GM12878 (cell line): ENCODE measurements at regions of chr13 and their contacts with region 1.

Region 1: DNA sequence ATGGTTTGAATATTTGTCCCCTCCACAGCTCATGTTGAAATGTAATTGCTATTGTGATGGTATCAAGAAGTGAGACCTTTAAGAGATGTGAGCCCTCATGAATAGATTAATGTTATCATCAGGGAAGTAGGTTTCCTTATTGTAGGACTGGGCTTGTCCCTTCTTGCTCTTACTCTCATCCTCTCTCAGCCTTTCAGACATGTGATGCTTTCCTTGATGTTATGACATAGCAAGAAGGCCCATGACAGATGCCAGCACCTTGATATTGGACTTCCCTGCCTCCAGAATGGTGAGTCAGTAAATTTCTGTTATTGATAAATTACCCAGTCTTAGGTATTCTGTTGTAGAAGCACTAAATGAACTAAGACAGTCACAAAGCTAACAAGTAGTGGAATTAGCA is 5.7 kb upstream of the ZMYM2 start:
- DNase-seq: no peak
- ATAC-seq: no peak
- H3K4me3 ChIP-seq: no peak overlapping the region
- H3K27ac ChIP-seq: no peak overlapping the region
- H3K4me1 ChIP-seq: no peaks in the 10 kb centered on the region
- H3K27me3 ChIP-seq: no peaks in the 10 kb centered on the region
- CTCF ChIP-seq: no peak
- EP300 ChIP-seq: no peak
- POLR2A ChIP-seq: no peak
- RAD21 ChIP-seq: no peak

Region 2: GRCh38 chr13:19940106-19940505 is 12.7 kb before region 1 on chr13:
- CTCF ChIA-PET with region 1: interaction called, 13 read pairs
- POLR2A ChIA-PET with region 1: interaction called, 3 read pairs
- RAD21 ChIA-PET with region 1: no interaction called
- SMC1A ChIA-PET with region 1: interaction called, 3 read pairs
- in situ Hi-C with region 1: no loop called
- intact Hi-C with region 1: no loop called
- DNase-seq: no peak
- ATAC-seq: no peak
- H3K4me3 ChIP-seq: no peak overlapping the region
- H3K27ac ChIP-seq: no peak overlapping the region
- H3K4me1 ChIP-seq: no peaks in the 10 kb centered on the region
- H3K27me3 ChIP-seq: no peaks in the 10 kb centered on the region
- CTCF ChIP-seq: no peak
- EP300 ChIP-seq: no peak
- POLR2A ChIP-seq: no peak
- RAD21 ChIP-seq: no peak

Region 3: DNA sequence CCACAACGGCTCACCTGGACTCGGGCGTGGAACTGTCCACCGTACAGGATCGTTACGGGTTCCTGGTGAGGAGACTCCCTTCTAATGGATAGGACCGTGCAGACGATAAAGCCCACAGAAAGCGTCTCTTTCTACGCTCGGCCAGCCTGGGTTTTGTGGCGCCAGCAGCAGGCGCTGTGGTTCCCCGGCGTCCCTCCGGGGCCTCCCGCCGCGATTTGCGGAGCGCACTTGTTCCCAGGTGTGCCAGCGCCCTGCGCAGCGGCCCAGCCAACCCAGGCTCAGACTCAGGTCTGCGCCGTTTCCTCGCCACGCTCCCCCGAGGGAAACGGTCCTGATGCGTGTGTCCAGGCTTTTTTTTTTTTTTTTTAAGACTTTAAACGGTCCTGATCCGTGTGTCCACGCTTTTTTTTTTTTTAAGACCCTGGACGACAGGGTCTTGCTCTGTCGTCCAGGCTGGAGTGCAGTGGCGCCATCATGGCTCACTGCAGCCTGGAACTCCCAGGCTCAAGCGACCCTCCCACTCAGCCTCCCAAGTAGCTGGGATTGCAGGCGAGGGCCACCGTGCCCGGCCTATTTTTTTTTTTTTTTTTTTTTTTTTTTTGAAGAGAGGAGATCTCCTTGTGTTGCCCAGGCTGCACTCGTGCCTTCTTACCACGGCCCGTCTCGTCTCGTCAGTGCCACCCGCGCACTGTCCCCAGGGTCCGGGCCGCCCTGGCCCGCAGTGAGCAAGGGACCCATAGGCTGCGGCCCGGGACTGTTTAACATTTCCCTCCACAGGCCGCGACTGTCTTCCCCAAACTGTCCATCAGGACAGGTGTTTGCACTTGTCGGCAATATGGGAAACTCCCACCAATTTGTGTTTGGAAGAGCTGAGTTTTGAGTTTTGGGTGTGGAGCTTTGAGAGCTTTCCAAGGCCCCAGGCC is 184.2 kb after region 1 on chr13:
- CTCF ChIA-PET with region 1: no interaction called
- POLR2A ChIA-PET with region 1: no interaction called
- RAD21 ChIA-PET with region 1: no interaction called
- SMC1A ChIA-PET with region 1: no interaction called
- in situ Hi-C with region 1: no loop called
- intact Hi-C with region 1: no loop called
- DNase-seq: no peak
- ATAC-seq: no peak
- H3K4me3 ChIP-seq: no peak overlapping the region
- H3K27ac ChIP-seq: no peak overlapping the region
- H3K4me1 ChIP-seq: no peaks in the 10 kb centered on the region
- H3K27me3 ChIP-seq: no peaks in the 10 kb centered on the region; a peak in 1 of 4 replicates
- CTCF ChIP-seq: peak in 2 of 3 experiments; percentile 37 to 42; a peak in 4 of 6 replicates
- EP300 ChIP-seq: no peak
- POLR2A ChIP-seq: no peak
- RAD21 ChIP-seq: no peak